CD4-positive, alpha-beta memory T cell (primary cell): ENCODE measurements at regions of chr1 and their contacts with region 1.

Region 1: DNA sequence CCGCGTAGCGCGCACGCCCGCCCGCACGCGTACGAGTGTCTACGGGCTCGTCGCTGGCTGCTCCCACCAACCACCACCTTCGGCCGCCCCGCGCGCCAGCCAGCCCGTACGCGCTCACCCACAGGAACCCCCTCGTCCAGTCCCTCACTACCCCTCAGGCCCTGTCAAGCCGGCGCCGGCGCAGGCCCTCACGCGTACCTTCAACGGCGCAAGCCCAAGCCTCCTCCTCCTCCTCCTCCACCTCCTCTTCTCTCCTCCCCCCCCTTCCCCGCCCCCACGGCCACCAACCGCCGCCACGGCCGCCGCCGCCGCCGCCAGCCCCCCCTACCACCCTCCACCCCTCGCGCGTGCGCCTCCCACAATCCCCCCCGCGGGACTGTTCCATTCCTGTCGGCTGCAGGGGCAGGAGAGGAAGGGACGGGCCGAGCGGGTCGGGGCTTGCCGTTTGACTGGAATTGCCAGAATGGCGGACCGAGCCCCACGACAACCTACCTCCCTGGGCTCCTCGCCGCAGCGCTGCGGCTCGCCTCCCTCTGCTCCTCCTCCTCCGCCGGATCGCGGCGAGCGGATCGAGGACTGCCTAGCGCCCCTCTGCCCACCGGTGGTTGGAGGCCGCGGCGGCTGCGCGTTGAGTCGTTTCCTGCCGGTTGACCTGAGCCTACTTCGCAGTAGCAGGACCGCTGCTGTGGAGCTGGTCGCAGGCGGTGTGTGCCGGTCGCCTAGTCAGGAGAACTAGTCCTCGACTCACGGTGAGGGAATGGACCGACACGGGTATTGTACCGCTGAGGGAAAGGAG is at the start of gene ASH1L:
- DNase-seq: peak; percentile 90 to 93 (median 92)
- H3K4me3 ChIP-seq: peak within 1 kb of the TSS; percentile 47 to 99
- H3K4me3 Mint-ChIP-seq: peak within 1 kb of the TSS; percentile 97 to 100 (median 99)
- H3K27ac ChIP-seq: peak within 1 kb of the TSS; percentile 96
- H3K27ac Mint-ChIP-seq: peak within 1 kb of the TSS; percentile 97 to 99 (median 98)
- H3K4me1 ChIP-seq: peaks cover 56% of the 10 kb centered on the region
- H3K4me1 Mint-ChIP-seq: peaks cover 28 to 66% (median 44%) of the 10 kb centered on the region in 4 donors
- H3K27me3 ChIP-seq: no peaks in the 10 kb centered on the region
- H3K27me3 Mint-ChIP-seq: no peaks in the 10 kb centered on the region
- total RNA-seq, gene ASH1L: 105 to 107 TPM

Region 2: DNA sequence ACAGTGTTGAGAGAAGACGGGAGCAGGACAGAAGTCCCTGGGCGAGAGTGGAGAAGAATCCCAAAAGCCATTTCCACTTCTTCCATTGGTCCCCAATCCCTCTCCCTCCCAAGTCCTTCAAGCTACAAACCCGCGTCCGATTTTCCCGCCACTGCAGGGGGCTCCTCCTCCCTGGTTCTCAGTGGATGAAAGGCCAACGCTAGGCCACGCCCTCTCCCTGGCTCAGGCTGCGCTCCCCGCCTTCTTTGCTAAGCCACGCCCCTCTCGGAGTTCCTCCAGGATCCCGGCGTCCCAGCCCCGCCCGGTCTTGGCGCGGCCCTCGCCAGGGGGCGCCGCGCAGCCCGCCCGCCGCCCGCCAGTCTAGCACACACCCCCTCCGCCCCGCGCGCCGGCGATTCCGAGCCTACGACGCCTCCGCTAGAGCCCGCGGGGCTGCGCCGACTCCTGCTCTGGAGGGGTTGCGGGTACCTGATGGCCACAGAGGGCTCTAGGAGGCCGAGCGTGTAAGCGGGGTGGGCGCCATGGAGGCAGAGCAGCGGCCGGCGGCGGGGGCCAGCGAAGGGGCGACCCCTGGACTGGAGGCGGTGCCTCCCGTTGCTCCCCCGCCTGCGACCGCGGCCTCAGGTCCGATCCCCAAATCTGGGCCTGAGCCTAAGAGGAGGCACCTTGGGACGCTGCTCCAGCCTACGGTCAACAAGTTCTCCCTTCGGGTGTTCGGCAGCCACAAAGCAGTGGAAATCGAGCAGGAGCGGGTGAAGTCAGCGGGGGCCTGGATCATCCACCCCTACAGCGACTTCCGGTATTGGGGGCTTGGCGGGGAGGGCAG is 285.5 kb before region 1 on chr1 and contains the start of gene HCN3:
- CTCF ChIA-PET with region 1: no interaction called
- POLR2A ChIA-PET with region 1: interaction called, 4 read pairs
- intact Hi-C with region 1: loop called (anchors 10 kb)
- DNase-seq: peak; percentile 80 to 90 (median 81)
- H3K4me3 ChIP-seq: peak within 1 kb of the TSS; percentile 62 to 81
- H3K4me3 Mint-ChIP-seq: peak within 1 kb of the TSS; percentile 78 to 86 (median 83)
- H3K27ac ChIP-seq: peak within 1 kb of the TSS; percentile 55
- H3K27ac Mint-ChIP-seq: peak within 1 kb of the TSS; percentile 42 to 91 (median 81)
- H3K4me1 ChIP-seq: peaks cover 35% of the 10 kb centered on the region
- H3K4me1 Mint-ChIP-seq: peaks cover 23 to 41% (median 32%) of the 10 kb centered on the region in 4 donors
- H3K27me3 ChIP-seq: no peaks in the 10 kb centered on the region
- H3K27me3 Mint-ChIP-seq: no peaks in the 10 kb centered on the region
- total RNA-seq, gene HCN3: 4.9 to 5.3 TPM

Region 3: GRCh38 chr1:155323798-155324610 is 238.8 kb before region 1 on chr1:
- CTCF ChIA-PET with region 1: no interaction called
- POLR2A ChIA-PET with region 1: interaction called, 7 read pairs
- intact Hi-C with region 1: loop called (anchors 1 kb)
- DNase-seq: peak; percentile 83 to 93 (median 85)
- H3K4me3 ChIP-seq: peak overlapping the region; percentile 91 to 96
- H3K4me3 Mint-ChIP-seq: peak overlapping the region; percentile 70 to 91 (median 88)
- H3K27ac ChIP-seq: peak overlapping the region; percentile 96
- H3K27ac Mint-ChIP-seq: peak overlapping the region; percentile 82 to 93 (median 90)
- H3K4me1 ChIP-seq: peaks cover 31% of the 10 kb centered on the region
- H3K4me1 Mint-ChIP-seq: peaks cover 14 to 46% (median 29%) of the 10 kb centered on the region in 4 donors
- H3K27me3 ChIP-seq: no peaks in the 10 kb centered on the region
- H3K27me3 Mint-ChIP-seq: no peaks in the 10 kb centered on the region

Region 4: GRCh38 chr1:155455588-155456195 is 107.1 kb before region 1 on chr1:
- CTCF ChIA-PET with region 1: no interaction called
- POLR2A ChIA-PET with region 1: no interaction called
- intact Hi-C with region 1: no loop called
- DNase-seq: no peak
- H3K4me3 ChIP-seq: no peak overlapping the region
- H3K4me3 Mint-ChIP-seq: no peak overlapping the region
- H3K27ac ChIP-seq: no peak overlapping the region
- H3K27ac Mint-ChIP-seq: peak overlapping the region in 3 of 7 donors; percentile 32 to 53 (median 39)
- H3K4me1 ChIP-seq: no peaks in the 10 kb centered on the region
- H3K4me1 Mint-ChIP-seq: peaks cover 5 to 11% (median 8%) of the 10 kb centered on the region in 4 donors
- H3K27me3 ChIP-seq: no peaks in the 10 kb centered on the region
- H3K27me3 Mint-ChIP-seq: no peaks in the 10 kb centered on the region

Region 5: GRCh38 chr1:155527677-155528076 is 35.1 kb before region 1 on chr1:
- CTCF ChIA-PET with region 1: no interaction called
- POLR2A ChIA-PET with region 1: interaction called, 4 read pairs
- intact Hi-C with region 1: loop called (anchors 5 kb)
- DNase-seq: no peak
- H3K4me3 ChIP-seq: no peak overlapping the region
- H3K4me3 Mint-ChIP-seq: no peak overlapping the region
- H3K27ac ChIP-seq: no peak overlapping the region
- H3K27ac Mint-ChIP-seq: no peak overlapping the region
- H3K4me1 ChIP-seq: peaks cover 27% of the 10 kb centered on the region
- H3K4me1 Mint-ChIP-seq: peaks cover 32 to 56% (median 41%) of the 10 kb centered on the region in 4 donors
- H3K27me3 ChIP-seq: no peaks in the 10 kb centered on the region
- H3K27me3 Mint-ChIP-seq: no peaks in the 10 kb centered on the region

Region 6: GRCh38 chr1:155537193-155537592 is 25.6 kb before region 1 on chr1:
- CTCF ChIA-PET with region 1: no interaction called
- POLR2A ChIA-PET with region 1: interaction called, 11 read pairs
- intact Hi-C with region 1: loop called (anchors 2 kb)
- DNase-seq: no peak
- H3K4me3 ChIP-seq: no peak overlapping the region
- H3K4me3 Mint-ChIP-seq: peak overlapping the region in 4 of 8 donors; percentile 21 to 46 (median 38)
- H3K27ac ChIP-seq: peak overlapping the region; percentile 19
- H3K27ac Mint-ChIP-seq: peak overlapping the region; percentile 69 to 95 (median 89)
- H3K4me1 ChIP-seq: peaks cover 80% of the 10 kb centered on the region
- H3K4me1 Mint-ChIP-seq: peaks cover 46 to 80% (median 59%) of the 10 kb centered on the region in 4 donors
- H3K27me3 ChIP-seq: no peaks in the 10 kb centered on the region
- H3K27me3 Mint-ChIP-seq: no peaks in the 10 kb centered on the region

Region 7: GRCh38 chr1:155609515-155610256 is 46.9 kb after region 1 on chr1 and contains the start of gene MSTO1:
- CTCF ChIA-PET with region 1: no interaction called
- POLR2A ChIA-PET with region 1: no interaction called
- intact Hi-C with region 1: no loop called
- DNase-seq: peak; percentile 89 to 97 (median 91)
- H3K4me3 ChIP-seq: peak within 1 kb of the TSS; percentile 54 to 80
- H3K4me3 Mint-ChIP-seq: peak within 1 kb of the TSS; percentile 90 to 99 (median 95)
- H3K27ac ChIP-seq: peak within 1 kb of the TSS; percentile 70
- H3K27ac Mint-ChIP-seq: peak within 1 kb of the TSS; percentile 75 to 98 (median 91)
- H3K4me1 ChIP-seq: peaks cover 4% of the 10 kb centered on the region
- H3K4me1 Mint-ChIP-seq: peaks cover 1 to 14% (median 5%) of the 10 kb centered on the region in 4 donors
- H3K27me3 ChIP-seq: no peaks in the 10 kb centered on the region
- H3K27me3 Mint-ChIP-seq: no peaks in the 10 kb centered on the region
- total RNA-seq, gene MSTO1: 125 to 127 TPM

Region 8: GRCh38 chr1:155648551-155649147 is 85.9 kb after region 1 on chr1:
- CTCF ChIA-PET with region 1: no interaction called
- POLR2A ChIA-PET with region 1: no interaction called
- intact Hi-C with region 1: no loop called
- DNase-seq: no peak
- H3K4me3 ChIP-seq: no peak overlapping the region
- H3K4me3 Mint-ChIP-seq: no peak overlapping the region
- H3K27ac ChIP-seq: no peak overlapping the region
- H3K27ac Mint-ChIP-seq: no peak overlapping the region
- H3K4me1 ChIP-seq: no peaks in the 10 kb centered on the region
- H3K4me1 Mint-ChIP-seq: no peaks in the 10 kb centered on the region
- H3K27me3 ChIP-seq: no peaks in the 10 kb centered on the region
- H3K27me3 Mint-ChIP-seq: peaks cover 0 to 2% of the 10 kb centered on the region in 2 donors

Region 9: DNA sequence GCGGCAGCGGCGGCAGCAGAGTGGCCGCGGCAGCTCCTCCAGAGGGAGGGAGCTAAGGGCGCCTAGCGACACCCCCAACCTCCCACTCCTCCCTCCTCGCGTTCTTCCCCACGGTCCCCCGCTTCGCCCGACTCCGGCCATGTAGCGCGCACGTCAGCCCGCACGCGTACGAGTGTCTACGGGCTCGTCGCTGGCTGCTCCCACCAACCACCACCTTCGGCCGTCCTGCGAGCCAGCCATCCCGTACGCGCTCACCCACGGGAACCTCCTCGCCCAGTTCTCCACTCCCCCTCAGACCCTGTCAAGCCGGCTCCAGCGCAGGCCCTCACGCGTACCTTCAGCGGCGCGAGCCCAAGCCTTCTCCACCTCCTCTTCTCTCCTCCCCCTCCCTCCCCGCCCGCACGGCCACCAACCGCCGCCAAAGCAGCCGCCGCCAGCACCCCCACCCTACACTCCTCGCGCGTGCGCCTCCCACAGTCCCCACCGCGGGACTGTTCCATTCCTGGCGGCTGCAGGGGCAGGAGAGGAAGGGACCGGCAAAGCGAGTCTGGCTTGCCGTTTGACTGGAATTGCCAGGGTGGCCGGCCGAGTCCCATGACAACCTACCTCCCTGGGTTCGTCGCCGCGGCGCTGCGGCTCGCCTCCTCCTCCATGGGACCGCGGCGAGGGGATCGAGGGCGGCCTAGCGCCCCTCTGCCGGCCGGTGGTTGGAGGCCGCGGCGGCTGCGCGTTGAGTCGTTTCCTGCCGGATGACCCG is 125.7 kb after region 1 on chr1 and contains the start of gene YY1AP1:
- CTCF ChIA-PET with region 1: no interaction called
- POLR2A ChIA-PET with region 1: no interaction called
- intact Hi-C with region 1: loop called (anchors 5 kb)
- DNase-seq: peak; percentile 91 to 96 (median 91)
- H3K4me3 ChIP-seq: peak within 1 kb of the TSS; percentile 84 to 92
- H3K4me3 Mint-ChIP-seq: peak within 1 kb of the TSS; percentile 94 to 99 (median 97)
- H3K27ac ChIP-seq: peak within 1 kb of the TSS; percentile 96
- H3K27ac Mint-ChIP-seq: peak within 1 kb of the TSS; percentile 95 to 99 (median 97)
- H3K4me1 ChIP-seq: peaks cover 66% of the 10 kb centered on the region
- H3K4me1 Mint-ChIP-seq: peaks cover 45 to 90% (median 64%) of the 10 kb centered on the region in 4 donors
- H3K27me3 ChIP-seq: no peaks in the 10 kb centered on the region
- H3K27me3 Mint-ChIP-seq: no peaks in the 10 kb centered on the region
- total RNA-seq, gene YY1AP1: 97.0 to 102 TPM